ENCODE measurements at regions of chr4 and their contacts with region 1.

Region 1: DNA sequence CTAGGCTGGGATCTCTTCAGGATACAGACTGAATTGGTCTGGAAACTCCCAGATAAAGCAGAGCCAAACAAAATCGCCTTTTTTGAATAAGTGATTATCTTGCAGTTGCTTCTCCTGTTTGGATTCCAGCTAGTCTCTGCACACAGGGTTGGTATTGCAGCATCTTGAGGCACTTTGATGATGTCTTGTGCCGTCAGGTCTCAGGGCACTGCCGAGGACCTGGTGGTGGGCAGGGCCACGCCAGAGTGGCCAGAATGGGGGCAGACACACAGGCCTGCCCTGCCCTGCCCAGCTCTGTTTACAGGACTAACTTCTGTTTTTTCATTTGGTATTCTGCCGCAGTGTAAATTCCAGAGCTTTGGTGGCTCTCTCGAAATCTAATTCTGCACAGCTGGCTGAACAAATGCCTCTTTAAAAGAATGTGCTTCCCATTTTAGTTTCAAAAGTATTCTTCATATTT is 276.1 kb downstream of the NR3C2 start:
- DNase-seq: no peak
- ATAC-seq: peak; percentile 73

Region 2: GRCh38 chr4:147879676-147880075 is 286.5 kb before region 1 on chr4:
- intact Hi-C with region 1: no loop called
- DNase-seq: no peak
- ATAC-seq: no peak

Region 3: GRCh38 chr4:148273501-148273986 is 107.4 kb after region 1 on chr4:
- intact Hi-C with region 1: loop called (anchors 10 kb)
- DNase-seq: no peak
- ATAC-seq: peak; percentile 90

Region 4: GRCh38 chr4:148405161-148405893 is 239.2 kb after region 1 on chr4:
- intact Hi-C with region 1: no loop called
- DNase-seq: no peak
- ATAC-seq: no peak